AG04449 (cell line): ENCODE measurements at regions of chr14 and their contacts with region 1.

Region 1: DNA sequence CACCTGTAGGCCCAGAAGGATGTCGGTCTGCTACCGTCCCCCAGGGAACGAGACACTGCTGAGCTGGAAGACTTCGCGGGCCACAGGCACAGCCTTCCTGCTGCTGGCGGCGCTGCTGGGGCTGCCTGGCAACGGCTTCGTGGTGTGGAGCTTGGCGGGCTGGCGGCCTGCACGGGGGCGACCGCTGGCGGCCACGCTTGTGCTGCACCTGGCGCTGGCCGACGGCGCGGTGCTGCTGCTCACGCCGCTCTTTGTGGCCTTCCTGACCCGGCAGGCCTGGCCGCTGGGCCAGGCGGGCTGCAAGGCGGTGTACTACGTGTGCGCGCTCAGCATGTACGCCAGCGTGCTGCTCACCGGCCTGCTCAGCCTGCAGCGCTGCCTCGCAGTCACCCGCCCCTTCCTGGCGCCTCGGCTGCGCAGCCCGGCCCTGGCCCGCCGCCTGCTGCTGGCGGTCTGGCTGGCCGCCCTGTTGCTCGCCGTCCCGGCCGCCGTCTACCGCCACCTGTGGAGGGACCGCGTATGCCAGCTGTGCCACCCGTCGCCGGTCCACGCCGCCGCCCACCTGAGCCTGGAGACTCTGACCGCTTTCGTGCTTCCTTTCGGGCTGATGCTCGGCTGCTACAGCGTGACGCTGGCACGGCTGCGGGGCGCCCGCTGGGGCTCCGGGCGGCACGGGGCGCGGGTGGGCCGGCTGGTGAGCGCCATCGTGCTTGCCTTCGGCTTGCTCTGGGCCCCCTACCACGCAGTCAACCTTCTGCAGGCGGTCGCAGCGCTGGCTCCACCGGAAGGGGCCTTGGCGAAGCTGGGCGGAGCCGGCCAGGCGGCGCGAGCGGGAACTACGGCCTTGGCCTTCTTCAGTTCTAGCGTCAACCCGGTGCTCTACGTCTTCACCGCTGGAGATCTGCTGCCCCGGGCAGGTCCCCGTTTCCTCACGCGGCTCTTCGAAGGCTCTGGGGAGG is at the start of gene LTB4R:
- DNase-seq: no peak
- H3K4me3 ChIP-seq: peak within 1 kb of the TSS; percentile 33
- CTCF ChIP-seq: peak; percentile 48

Region 2: GRCh38 chr14:24215495-24216344 is 95.2 kb before region 1 on chr14 and contains the start of gene MDP1:
- CTCF ChIA-PET with region 1: interaction called, 34 read pairs
- POLR2A ChIA-PET with region 1: no interaction called
- DNase-seq: peak; percentile 33
- H3K4me3 ChIP-seq: peak within 1 kb of the TSS; percentile 90
- CTCF ChIP-seq: peak; percentile 70

Region 3: DNA sequence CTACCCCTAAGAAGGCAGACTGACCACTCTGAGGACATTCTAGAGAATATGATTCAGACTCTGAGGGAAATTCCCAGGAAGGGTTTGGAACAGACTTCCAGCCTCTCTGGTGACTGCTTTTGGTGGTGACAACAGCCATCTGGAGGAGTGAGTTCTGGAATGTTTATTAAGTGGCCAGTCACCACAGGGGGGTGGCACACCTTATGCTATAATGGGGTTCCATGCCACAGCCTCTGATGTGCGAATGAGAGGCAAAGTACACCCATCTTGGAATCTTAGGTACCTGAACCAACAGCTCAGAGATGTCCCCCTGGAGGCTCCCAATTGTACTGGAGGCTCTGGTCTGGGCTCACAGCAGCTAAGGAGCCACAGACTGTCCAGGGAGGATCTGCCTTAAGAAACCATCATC is 59.0 kb before region 1 on chr14:
- CTCF ChIA-PET with region 1: interaction called, 118 read pairs
- POLR2A ChIA-PET with region 1: no interaction called
- DNase-seq: no peak
- H3K4me3 ChIP-seq: no peak overlapping the region
- CTCF ChIP-seq: no peak

Region 4: GRCh38 chr14:24271134-24271833 is 39.6 kb before region 1 on chr14 and contains the start of gene RABGGTA:
- CTCF ChIA-PET with region 1: interaction called, 16 read pairs
- POLR2A ChIA-PET with region 1: interaction called, 4 read pairs
- DNase-seq: no peak
- H3K4me3 ChIP-seq: peak within 1 kb of the TSS; percentile 98
- CTCF ChIP-seq: peak; percentile 97

Region 5: GRCh38 chr14:24279301-24280186 is 31.4 kb before region 1 on chr14:
- CTCF ChIA-PET with region 1: interaction called, 15 read pairs
- POLR2A ChIA-PET with region 1: no interaction called
- DNase-seq: no peak
- H3K4me3 ChIP-seq: no peak overlapping the region
- CTCF ChIP-seq: no peak

Region 6: GRCh38 chr14:24289649-24290249 is 21.2 kb before region 1 on chr14:
- CTCF ChIA-PET with region 1: interaction called, 688 read pairs
- POLR2A ChIA-PET with region 1: no interaction called
- DNase-seq: no peak
- H3K4me3 ChIP-seq: no peak overlapping the region
- CTCF ChIP-seq: no peak

Region 7: DNA sequence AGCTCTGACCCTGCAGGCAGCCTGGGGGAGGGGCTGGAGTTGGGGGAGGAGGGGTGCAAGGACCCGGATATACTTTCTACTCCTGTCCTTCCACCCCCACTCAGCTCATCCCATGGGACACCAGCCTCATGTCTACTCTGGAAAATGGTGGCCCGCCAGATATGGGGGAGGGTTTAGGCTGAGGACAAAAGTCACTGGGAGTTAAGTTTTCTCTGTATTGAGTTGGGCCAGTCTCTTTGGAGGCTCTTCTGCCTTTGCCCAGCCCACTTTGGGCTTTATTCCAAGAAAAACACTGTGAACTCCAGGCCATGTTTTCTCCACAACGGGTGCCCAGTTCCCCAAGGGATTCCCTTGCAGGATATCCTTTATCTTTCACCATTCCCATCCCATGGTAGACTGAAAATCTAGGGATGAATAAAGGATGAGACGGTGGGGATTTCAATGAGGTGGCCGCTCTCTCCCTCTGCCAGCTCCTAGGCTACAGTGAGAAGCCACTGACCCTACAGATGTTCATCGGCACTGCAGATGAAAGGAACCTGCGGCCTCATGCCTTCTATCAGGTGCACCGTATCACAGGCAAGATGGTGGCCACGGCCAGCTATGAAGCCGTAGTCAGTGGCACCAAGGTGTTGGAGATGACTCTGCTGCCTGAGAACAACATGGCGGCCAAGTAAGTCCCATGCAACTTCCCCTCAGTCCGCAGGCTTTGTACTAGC is 61.9 kb after region 1 on chr14:
- CTCF ChIA-PET with region 1: interaction called, 11 read pairs
- POLR2A ChIA-PET with region 1: no interaction called
- DNase-seq: no peak
- H3K4me3 ChIP-seq: no peak overlapping the region
- CTCF ChIP-seq: no peak

Region 8: GRCh38 chr14:24504425-24504950 is 193.6 kb after region 1 on chr14:
- CTCF ChIA-PET with region 1: no interaction called
- POLR2A ChIA-PET with region 1: no interaction called
- DNase-seq: no peak
- H3K4me3 ChIP-seq: no peak overlapping the region
- CTCF ChIP-seq: no peak